Endothelial cell of umbilical vein (primary cell): ENCODE measurements at regions of chr3 and their contacts with region 1.

Region 1: DNA sequence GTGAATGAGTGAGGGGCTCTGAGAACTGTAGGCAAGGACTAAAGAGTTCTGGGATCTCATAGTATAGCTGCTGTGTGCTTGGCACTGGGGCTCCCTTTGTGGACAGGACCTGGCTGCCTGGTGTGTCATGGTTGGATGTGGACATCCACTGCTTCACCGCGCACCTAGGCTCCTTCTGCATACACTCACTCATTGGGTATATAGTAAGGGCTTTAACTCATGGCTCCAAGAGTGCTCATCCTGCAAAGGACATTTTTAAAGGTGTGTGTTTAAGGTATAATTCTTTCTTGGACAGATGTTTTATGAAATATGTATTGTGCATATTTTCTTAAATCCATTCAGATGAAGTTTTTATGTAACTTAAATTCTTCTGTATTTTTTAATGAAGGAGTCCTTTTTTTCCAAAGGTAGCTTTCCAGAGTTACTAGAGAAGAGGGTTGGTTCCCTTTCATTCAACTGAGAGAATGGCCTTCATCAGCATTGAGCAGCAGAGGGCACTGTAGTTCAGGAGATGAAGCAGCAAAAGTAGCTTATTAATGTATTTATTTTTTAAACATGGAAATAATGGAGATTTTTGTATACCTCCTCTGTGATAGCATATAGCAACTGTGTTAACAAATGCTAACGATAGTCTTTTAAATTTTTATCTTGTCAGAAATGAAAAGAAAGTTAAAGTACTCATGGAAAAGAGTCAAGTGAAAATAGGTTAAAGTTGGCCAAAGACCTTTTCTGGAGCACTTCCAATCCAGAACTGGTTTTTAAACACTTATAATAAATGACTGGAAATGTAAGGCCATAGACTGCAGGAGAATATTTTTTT is 25.2 kb downstream of the OXNAD1 start:
- DNase-seq: peak; percentile 70
- H3K4me3 ChIP-seq: no peak overlapping the region
- H3K27ac ChIP-seq: no peak overlapping the region
- H3K4me1 ChIP-seq: peaks cover 2% of the 10 kb centered on the region
- H3K27me3 ChIP-seq: no peaks in the 10 kb centered on the region
- CTCF ChIP-seq: peak; percentile 58 to 60
- POLR2A ChIP-seq: no peak

Region 2: DNA sequence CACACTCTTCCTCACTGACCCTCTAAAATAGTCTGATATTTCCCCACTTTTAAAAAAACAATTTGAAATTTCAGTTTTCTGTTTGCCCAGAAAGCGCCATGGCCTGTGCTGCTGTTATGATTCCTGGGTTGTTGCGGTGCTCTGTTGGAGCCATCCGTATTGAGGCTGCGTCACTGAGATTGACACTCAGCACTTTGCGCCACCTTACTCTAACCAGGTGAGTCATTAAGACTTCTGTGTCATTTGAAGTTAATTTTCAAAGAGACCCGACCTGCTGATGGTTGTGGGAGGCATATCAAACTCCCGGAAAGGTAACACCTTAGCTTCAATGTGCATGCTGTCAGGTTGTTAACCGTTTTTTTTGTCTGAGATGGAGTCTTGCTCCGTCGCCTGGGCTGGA is 19.4 kb before region 1 on chr3:
- CTCF ChIA-PET with region 1: interaction called, 66 read pairs
- POLR2A ChIA-PET with region 1: no interaction called
- dilution Hi-C with region 1: no loop called
- intact Hi-C with region 1: loop called (anchors 2 kb)
- DNase-seq: no peak
- H3K4me3 ChIP-seq: no peak overlapping the region
- H3K27ac ChIP-seq: no peak overlapping the region
- H3K4me1 ChIP-seq: peaks cover 6% of the 10 kb centered on the region
- H3K27me3 ChIP-seq: no peaks in the 10 kb centered on the region
- CTCF ChIP-seq: no peak
- POLR2A ChIP-seq: no peak

Region 3: DNA sequence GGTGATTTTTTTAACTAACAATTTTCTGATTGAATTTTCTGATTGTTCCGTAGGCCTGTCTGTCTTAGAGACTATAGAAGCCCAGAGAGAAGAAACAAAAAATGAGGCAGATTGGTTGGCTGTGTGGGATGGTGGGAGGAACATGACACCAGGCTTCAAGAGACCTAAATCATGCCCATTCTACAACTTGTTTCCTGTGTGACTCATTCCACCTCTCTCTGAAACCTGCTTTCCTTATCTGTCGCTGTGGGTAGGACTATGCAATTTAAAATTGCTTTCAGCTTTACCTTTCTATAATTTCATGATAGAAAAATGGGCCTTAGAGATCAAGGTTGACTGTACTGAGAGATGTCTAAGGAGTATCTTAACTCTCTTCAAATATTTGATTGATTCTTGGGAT is 19.3 kb after region 1 on chr3:
- CTCF ChIA-PET with region 1: interaction called, 21 read pairs
- POLR2A ChIA-PET with region 1: no interaction called
- dilution Hi-C with region 1: no loop called
- intact Hi-C with region 1: no loop called
- DNase-seq: peak; percentile 53
- H3K4me3 ChIP-seq: no peak overlapping the region
- H3K27ac ChIP-seq: no peak overlapping the region
- H3K4me1 ChIP-seq: peaks cover 4% of the 10 kb centered on the region
- H3K27me3 ChIP-seq: no peaks in the 10 kb centered on the region
- CTCF ChIP-seq: no peak
- POLR2A ChIP-seq: no peak

Region 4: DNA sequence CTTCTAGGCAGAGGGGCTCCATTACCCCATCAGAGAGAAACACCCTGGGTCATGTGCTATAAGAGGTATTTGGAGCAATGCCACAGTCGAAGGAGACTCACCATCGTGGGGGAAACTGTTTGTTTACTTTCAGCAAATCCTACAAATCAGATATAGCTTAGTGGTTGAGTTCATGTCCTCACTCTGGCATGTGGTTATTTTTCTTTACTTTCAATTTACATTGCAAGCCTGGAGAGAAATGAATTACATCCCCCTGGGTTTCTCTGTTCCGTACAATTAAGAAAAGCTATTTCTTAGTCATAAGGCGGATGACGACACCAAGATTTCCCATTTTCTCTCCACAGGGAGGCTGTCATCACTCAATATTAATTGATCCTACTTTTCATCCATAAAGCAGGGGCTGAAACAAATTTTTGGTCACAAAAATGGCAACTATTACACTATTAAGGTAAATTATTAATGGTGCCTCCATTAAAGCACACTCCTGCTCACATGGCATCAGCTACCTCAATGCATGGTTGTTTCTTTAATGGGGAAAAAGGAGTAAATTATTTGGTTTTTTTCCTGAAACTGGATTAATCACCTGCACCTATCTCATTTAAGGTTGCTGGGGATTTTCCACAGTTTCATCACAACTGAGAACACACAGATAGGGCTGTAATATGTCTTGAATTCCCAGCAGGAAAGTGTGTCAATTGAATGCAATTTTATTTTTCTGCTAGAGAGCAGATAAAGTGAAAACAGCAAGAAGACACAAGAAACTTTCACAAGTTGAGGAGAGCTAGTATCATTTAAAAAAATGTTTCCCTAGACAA is 186.6 kb after region 1 on chr3:
- CTCF ChIA-PET with region 1: interaction called, 13 read pairs
- POLR2A ChIA-PET with region 1: no interaction called
- dilution Hi-C with region 1: no loop called
- intact Hi-C with region 1: no loop called
- DNase-seq: peak; percentile 90
- H3K4me3 ChIP-seq: no peak overlapping the region
- H3K27ac ChIP-seq: peak overlapping the region; percentile 42
- H3K4me1 ChIP-seq: peaks cover 52% of the 10 kb centered on the region
- H3K27me3 ChIP-seq: no peaks in the 10 kb centered on the region
- CTCF ChIP-seq: no peak
- POLR2A ChIP-seq: no peak

Region 5: DNA sequence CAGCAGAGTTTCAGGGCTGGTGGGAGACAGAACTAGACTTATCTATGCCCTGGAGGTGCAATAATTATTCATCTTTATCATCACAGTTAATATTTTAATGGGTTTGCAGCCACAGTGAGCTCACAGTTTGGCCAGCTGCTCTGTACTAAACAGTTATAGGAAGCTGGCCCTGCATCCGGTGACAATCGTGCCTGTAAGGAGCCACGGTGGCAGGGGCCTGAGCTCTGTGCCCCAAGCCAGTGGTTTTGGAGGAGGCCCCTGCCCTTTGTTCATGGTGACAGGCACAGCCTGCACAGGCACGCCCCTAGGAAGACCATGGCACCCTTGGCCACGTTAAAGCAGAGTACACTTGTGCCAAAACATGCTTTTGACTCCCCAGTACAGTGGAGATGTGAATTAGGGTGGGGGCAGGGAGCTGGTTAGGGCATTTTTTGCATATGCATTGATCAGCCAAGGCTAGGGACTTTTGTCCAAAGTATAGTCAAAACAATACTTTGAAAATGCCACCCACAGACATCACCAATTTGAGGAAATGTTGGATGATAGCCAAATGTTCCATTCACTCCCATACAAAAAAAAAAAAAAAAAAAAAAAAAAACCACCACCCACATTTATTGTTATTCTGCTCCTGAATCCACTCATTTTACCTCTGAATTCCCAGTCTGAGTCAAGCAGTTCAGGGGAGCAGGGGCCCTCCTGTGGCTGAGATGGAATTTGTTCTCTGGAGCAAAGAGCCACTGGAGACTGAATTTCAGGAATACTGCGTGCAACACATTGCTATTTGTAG is 226.7 kb after region 1 on chr3:
- CTCF ChIA-PET with region 1: interaction called, 197 read pairs
- POLR2A ChIA-PET with region 1: no interaction called
- dilution Hi-C with region 1: no loop called
- intact Hi-C with region 1: loop called (anchors 1 kb)
- DNase-seq: peak; percentile 76
- H3K4me3 ChIP-seq: no peak overlapping the region
- H3K27ac ChIP-seq: no peak overlapping the region
- H3K4me1 ChIP-seq: peaks cover 16% of the 10 kb centered on the region
- H3K27me3 ChIP-seq: peaks cover 4% of the 10 kb centered on the region in 2 experiments
- CTCF ChIP-seq: peak; percentile 57 to 66
- POLR2A ChIP-seq: no peak

Region 6: GRCh38 chr3:16545413-16546185 is 255.4 kb after region 1 on chr3:
- CTCF ChIA-PET with region 1: interaction called, 188 read pairs
- POLR2A ChIA-PET with region 1: no interaction called
- dilution Hi-C with region 1: no loop called
- intact Hi-C with region 1: loop called (anchors 1 kb)
- DNase-seq: no peak
- H3K4me3 ChIP-seq: no peak overlapping the region
- H3K27ac ChIP-seq: no peak overlapping the region
- H3K4me1 ChIP-seq: peaks cover 5% of the 10 kb centered on the region
- H3K27me3 ChIP-seq: peaks cover 6 to 15% of the 10 kb centered on the region in 2 experiments
- CTCF ChIP-seq: no peak
- POLR2A ChIP-seq: no peak

Region 7: GRCh38 chr3:16587047-16587680 is 296.9 kb after region 1 on chr3:
- CTCF ChIA-PET with region 1: interaction called, 12 read pairs
- POLR2A ChIA-PET with region 1: no interaction called
- dilution Hi-C with region 1: no loop called
- intact Hi-C with region 1: no loop called
- DNase-seq: no peak
- H3K4me3 ChIP-seq: no peak overlapping the region
- H3K27ac ChIP-seq: no peak overlapping the region
- H3K4me1 ChIP-seq: no peaks in the 10 kb centered on the region
- H3K27me3 ChIP-seq: no peaks in the 10 kb centered on the region
- CTCF ChIP-seq: no peak
- POLR2A ChIP-seq: no peak